IMR-90 (cell line): ENCODE measurements at regions of chr2 and their contacts with region 1.

Region 1: GRCh38 chr2:182625814-182626213 is 90.2 kb upstream of the DNAJC10 start:
- DNase-seq: no peak
- ATAC-seq: no peak
- H3K4me3 ChIP-seq: no peak overlapping the region
- H3K27ac ChIP-seq: no peak overlapping the region
- H3K4me1 ChIP-seq: peaks cover 2% of the 10 kb centered on the region; the same call in 1 of the 2 replicates
- H3K27me3 ChIP-seq: no peaks in the 10 kb centered on the region
- CTCF ChIP-seq: no peak
- POLR2A ChIP-seq: no peak
- RAD21 ChIP-seq: no peak

Region 2: GRCh38 chr2:181984814-181985631 is 640.8 kb before region 1 on chr2:
- CTCF ChIA-PET with region 1: no interaction called
- POLR2A ChIA-PET with region 1: no interaction called
- dilution Hi-C with region 1: no loop called
- in situ Hi-C with region 1: no loop called
- intact Hi-C with region 1: no loop called
- DNase-seq: peak; percentile 38
- ATAC-seq: peak; percentile 77
- H3K4me3 ChIP-seq: no peak overlapping the region
- H3K27ac ChIP-seq: no peak overlapping the region
- H3K4me1 ChIP-seq: peaks cover 2% of the 10 kb centered on the region; the same call in 1 of the 2 replicates
- H3K27me3 ChIP-seq: no peaks in the 10 kb centered on the region
- CTCF ChIP-seq: no peak
- POLR2A ChIP-seq: no peak
- RAD21 ChIP-seq: no peak

Region 3: GRCh38 chr2:182540252-182540651 is 85.6 kb before region 1 on chr2:
- CTCF ChIA-PET with region 1: interaction called, 13 read pairs
- POLR2A ChIA-PET with region 1: no interaction called
- dilution Hi-C with region 1: no loop called
- in situ Hi-C with region 1: no loop called
- intact Hi-C with region 1: no loop called
- DNase-seq: no peak
- ATAC-seq: no peak
- H3K4me3 ChIP-seq: no peak overlapping the region
- H3K27ac ChIP-seq: no peak overlapping the region
- H3K4me1 ChIP-seq: peaks cover 2% of the 10 kb centered on the region; the same call in 1 of the 2 replicates
- H3K27me3 ChIP-seq: no peaks in the 10 kb centered on the region
- CTCF ChIP-seq: no peak
- POLR2A ChIP-seq: no peak
- RAD21 ChIP-seq: no peak